ENCODE measurements at regions of chr1 and their contacts with region 1.

Region 1: GRCh38 chr1:181166377-181167196 is 78.1 kb downstream of the IER5 start:
- DNase-seq: peak in 41 of 42 donors; percentile 38 to 88 (median 72)

Region 2: DNA sequence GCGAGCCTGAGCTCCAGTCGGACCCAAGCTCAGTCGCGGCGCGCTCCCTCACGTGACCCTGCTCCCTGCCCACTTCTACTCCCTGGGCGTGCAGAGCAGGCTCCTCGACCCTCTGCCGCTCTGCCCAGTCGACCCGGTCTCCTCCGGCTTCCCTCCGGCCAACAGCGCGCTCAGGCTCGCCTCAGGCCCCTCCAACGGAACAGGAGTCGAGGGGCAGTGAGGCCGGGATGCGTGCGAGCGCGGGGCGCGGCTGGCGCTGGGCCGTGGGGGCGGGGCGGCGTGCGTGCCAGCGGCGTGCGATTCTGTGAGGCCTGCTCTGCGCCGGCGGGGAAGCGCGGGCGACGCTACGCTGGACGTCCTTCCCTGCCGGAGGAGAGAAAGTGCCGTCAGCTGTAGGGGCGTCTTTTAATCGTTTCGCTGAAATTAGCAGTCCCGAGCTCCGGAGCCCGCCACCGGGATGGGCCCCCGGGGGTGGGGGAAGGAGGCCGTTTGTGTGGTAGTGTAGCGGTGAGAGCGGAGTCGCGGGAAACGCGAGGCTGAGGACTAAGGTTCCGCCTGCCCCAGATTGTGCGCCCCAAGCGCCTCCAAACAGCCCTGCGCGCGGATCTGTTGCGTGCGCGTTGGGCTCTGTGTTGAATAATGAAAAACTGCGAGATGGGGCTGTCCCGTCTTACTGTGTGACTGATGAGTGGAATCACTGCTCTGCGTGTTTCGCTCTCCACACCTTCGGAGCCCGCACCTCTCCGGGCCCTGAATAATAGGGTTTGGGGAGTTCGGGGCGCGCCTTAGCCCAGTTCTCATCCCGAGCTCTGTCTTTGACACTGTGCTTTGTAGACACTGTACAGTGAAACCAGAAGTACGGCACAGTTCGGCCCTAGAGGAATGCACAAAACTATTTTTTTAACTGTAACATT is 664.0 kb before region 1 on chr1 and contains the start of gene ACBD6:
- intact Hi-C with region 1: loop called (anchors 10 kb)
- DNase-seq: peak; percentile 78 to 95 (median 88)

Region 3: GRCh38 chr1:180881806-180882509 is 284.6 kb before region 1 on chr1:
- intact Hi-C with region 1: loop called (anchors 5 kb)
- DNase-seq: peak in 2 of 42 donors; percentile 10 to 12